ENCODE measurements at regions of chr1 and their contacts with region 1.

Region 1: GRCh38 chr1:84478876-84479868 is at the start of gene RPF1:
- DNase-seq: peak; percentile 83 to 86 (median 85)
- H3K4me3 ChIP-seq: peak within 1 kb of the TSS; percentile 93
- H3K4me3 Mint-ChIP-seq: peak within 1 kb of the TSS; percentile 96 to 100 (median 99)
- H3K27ac ChIP-seq: peak within 1 kb of the TSS; percentile 65
- H3K27ac Mint-ChIP-seq: peak within 1 kb of the TSS; percentile 96 to 99 (median 98)
- H3K4me1 ChIP-seq: peaks cover 41% of the 10 kb centered on the region
- H3K4me1 Mint-ChIP-seq: peaks cover 31 to 54% (median 41%) of the 10 kb centered on the region in 4 donors
- H3K27me3 ChIP-seq: no peaks in the 10 kb centered on the region
- H3K27me3 Mint-ChIP-seq: peaks cover 13 to 21% of the 10 kb centered on the region in 2 donors
- total RNA-seq, gene RPF1: 41.7 to 46.2 TPM

Region 2: DNA sequence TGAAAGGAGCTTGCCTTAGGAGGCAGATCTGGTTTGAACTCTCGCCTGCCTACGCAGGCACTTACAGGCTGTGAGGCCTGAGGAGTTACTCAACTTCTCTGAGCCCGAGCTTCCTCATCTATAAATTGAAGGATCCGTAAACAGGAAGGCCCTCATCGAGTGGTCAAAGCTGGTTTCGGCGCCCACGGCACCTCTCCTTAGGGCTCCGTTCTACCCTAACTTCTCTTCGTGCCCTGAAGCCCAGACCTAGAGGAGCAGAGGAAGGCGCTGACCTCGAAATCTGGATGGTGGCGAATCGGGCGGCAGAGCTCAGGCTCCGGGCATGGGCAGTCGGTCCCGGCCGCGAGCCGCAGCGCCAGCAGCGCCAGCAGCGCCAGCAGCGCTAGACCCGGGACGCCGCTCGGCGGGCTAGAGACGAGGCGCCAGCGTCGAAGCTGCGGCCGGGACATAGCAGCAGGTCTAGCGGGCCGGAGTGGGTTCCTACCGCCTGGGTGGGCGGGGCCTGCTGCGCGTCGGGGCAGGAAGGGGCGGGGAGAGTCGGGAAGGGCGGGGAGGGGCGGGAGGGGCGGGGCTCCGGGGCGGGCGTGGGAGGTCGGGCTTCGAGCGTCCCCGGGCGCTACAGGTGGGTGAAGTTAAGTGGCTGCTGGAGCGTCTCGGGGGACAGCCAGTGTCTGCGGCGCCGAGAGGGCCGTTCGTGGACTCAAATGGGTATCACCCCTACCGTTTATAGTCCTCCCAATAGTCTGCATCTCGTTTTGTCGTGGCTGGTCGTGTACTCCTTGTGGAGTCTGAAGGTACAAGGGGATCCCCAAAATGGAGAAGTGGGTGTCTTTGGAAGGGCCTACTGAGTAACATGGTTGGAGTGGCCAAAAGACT is 95.0 kb after region 1 on chr1 and contains the start of gene CTBS:
- CTCF ChIA-PET with region 1: interaction called, 5 read pairs
- POLR2A ChIA-PET with region 1: interaction called, 61 read pairs
- intact Hi-C with region 1: loop called (anchors 1 kb)
- DNase-seq: peak; percentile 80 to 84 (median 83)
- H3K4me3 ChIP-seq: peak within 1 kb of the TSS; percentile 78 to 97
- H3K4me3 Mint-ChIP-seq: peak within 1 kb of the TSS; percentile 96 to 99 (median 98)
- H3K27ac ChIP-seq: peak within 1 kb of the TSS; percentile 98
- H3K27ac Mint-ChIP-seq: peak within 1 kb of the TSS; percentile 99 to 100 (median 100)
- H3K4me1 ChIP-seq: peaks cover 37% of the 10 kb centered on the region
- H3K4me1 Mint-ChIP-seq: peaks cover 29 to 46% (median 39%) of the 10 kb centered on the region in 4 donors
- H3K27me3 ChIP-seq: no peaks in the 10 kb centered on the region
- H3K27me3 Mint-ChIP-seq: no peaks in the 10 kb centered on the region
- total RNA-seq, gene CTBS: 17.4 to 18.2 TPM

Region 3: DNA sequence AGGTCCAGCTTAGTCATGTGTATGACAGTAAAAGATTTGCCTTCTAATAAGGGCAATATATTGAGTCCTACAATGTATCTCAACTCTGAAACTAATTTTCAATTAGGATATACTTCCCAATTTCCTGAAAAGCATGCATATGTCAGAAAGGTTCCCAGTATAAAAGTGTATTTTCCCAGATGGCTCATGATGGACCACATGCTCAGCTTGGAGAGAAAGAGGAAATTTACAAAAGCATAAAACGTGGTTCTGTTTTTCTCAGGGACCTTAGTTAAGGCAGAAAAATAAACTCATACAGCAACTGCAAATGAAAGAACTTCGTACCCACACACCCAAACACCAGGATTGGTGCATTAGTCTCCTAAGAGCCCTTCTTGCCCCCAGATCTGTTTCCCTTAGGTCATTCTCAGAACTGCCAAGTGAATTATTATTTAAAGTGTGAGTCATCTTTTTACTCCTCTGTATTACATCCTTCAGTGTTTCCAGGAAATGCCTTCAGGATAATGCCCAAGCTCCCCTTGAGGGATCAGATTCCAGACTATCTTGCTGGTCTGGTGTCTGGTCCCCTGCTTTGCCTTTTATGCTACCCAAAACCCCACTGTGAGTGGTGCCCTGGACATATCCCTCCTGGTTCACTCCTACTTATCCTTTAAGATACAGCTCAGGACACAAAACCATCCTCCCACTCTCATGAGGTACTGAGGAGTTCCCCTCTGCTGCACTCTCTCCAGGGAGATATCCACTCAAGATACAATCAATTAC is 153.7 kb after region 1 on chr1:
- CTCF ChIA-PET with region 1: no interaction called
- POLR2A ChIA-PET with region 1: no interaction called
- intact Hi-C with region 1: no loop called
- DNase-seq: no peak
- H3K4me3 ChIP-seq: no peak overlapping the region
- H3K4me3 Mint-ChIP-seq: no peak overlapping the region
- H3K27ac ChIP-seq: no peak overlapping the region
- H3K27ac Mint-ChIP-seq: no peak overlapping the region
- H3K4me1 ChIP-seq: no peaks in the 10 kb centered on the region
- H3K4me1 Mint-ChIP-seq: peaks cover 0 to 2% (median 0%) of the 10 kb centered on the region in 4 donors
- H3K27me3 ChIP-seq: no peaks in the 10 kb centered on the region
- H3K27me3 Mint-ChIP-seq: peaks cover 6 to 14% of the 10 kb centered on the region in 2 donors

Measured in CD4-positive, alpha-beta memory T cell (primary cell).